ENCODE measurements at regions of chr19 and their contacts with region 1.

Region 1: DNA sequence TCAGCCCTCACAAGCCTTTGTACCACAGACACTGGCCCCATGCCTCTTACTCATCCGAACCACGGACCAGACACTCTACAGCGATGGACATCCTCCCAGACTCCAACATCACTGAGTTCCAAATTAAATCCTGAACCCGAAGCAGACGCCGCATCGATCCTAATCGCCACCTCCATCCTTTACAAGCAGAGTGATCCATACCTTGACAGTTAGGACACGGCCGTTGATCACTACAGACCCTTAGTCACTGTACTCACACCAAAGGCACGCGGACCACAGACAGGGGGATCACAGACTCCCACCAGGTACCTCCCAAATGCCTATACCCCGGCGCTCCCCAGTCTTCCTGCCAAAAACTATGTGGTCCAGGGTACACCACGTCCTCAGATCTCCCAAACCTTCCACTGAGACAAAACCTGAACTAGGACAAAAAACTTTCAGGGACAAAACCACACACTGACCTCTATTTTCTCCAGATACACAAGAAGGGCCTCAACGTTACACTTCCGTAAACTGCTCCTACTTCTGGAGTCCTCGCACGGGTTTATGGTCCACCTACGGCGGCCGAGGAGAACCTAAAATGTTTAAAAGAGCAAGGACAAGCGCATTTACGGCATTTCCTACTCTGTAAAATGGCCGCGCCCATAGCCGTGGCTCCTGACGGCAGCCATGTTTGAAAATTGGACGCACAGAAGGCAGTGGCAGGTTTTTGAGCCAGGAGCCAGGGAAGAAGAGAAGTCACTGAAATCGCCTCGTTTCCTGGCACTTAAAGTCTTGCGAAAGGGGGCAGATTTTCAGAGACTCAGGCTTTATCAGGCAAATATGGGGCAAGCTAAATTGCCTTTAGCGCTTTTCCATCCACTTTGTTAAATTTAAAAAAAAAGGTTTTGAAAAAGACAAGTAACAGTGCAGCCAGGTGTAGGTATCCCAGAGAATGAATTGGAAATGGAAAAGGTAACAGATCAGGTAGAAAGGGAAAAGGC is at the start of gene ZNF350:
- DNase-seq: peak; percentile 93 to 96 (median 94)
- ATAC-seq: peak; percentile 98 to 99
- H3K4me3 ChIP-seq: peak within 1 kb of the TSS; percentile 99
- H3K27ac ChIP-seq: peak within 1 kb of the TSS; percentile 82
- H3K4me1 ChIP-seq: peaks cover 4% of the 10 kb centered on the region
- H3K27me3 ChIP-seq: no peaks in the 10 kb centered on the region
- total RNA-seq, gene ZNF350: 9.2 to 11.3 (median 9.8) TPM

Region 2: DNA sequence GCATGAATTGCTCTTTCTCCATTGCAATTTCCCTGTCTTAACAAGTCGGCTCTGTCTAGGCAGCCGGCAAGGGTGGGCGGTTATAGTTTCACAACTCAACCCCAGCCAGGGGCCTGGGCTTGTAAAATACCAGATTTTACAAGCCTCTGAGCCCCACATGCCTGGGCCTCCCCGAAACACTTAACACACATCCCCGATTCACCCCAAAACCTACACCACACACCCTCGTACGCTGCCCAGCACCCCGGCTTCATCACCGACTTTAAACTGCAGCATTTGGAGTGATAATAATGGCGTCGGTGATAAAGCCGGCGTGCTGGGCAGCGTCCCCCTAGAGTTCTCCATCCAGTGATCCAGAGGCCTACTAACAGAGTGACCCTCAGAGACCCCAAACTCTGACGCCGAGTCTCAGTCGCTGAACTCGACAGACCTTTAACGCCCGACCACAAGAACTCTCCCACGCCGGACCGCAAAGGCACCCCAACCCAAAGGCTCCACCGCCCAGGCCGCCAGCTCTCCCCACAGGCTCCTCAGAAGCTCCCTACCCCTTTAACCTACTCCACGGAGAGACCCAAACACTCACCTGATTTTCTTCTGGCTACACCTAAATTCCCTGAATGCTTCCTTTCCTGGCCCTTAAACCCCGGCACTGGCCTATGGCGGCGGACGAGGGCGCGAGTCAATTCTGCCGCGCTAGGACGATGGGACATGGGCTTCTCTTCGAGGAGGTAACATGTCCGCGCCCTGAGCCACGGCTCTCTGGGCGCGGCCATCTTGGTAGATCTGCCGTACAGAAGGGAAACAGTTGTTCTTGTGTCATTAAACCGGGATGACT is 82.1 kb before region 1 on chr19 and contains the start of gene ZNF649:
- intact Hi-C with region 1: loop called in 1 of 4 experiments (anchors 10 kb)
- DNase-seq: peak; percentile 84 to 94 (median 93)
- ATAC-seq: peak; percentile 100
- H3K4me3 ChIP-seq: peak within 1 kb of the TSS; percentile 93
- H3K27ac ChIP-seq: peak within 1 kb of the TSS; percentile 84
- H3K4me1 ChIP-seq: no peaks in the 10 kb centered on the region
- H3K27me3 ChIP-seq: no peaks in the 10 kb centered on the region
- total RNA-seq, gene ZNF649: 11.2 to 14.1 (median 11.7) TPM

Region 3: DNA sequence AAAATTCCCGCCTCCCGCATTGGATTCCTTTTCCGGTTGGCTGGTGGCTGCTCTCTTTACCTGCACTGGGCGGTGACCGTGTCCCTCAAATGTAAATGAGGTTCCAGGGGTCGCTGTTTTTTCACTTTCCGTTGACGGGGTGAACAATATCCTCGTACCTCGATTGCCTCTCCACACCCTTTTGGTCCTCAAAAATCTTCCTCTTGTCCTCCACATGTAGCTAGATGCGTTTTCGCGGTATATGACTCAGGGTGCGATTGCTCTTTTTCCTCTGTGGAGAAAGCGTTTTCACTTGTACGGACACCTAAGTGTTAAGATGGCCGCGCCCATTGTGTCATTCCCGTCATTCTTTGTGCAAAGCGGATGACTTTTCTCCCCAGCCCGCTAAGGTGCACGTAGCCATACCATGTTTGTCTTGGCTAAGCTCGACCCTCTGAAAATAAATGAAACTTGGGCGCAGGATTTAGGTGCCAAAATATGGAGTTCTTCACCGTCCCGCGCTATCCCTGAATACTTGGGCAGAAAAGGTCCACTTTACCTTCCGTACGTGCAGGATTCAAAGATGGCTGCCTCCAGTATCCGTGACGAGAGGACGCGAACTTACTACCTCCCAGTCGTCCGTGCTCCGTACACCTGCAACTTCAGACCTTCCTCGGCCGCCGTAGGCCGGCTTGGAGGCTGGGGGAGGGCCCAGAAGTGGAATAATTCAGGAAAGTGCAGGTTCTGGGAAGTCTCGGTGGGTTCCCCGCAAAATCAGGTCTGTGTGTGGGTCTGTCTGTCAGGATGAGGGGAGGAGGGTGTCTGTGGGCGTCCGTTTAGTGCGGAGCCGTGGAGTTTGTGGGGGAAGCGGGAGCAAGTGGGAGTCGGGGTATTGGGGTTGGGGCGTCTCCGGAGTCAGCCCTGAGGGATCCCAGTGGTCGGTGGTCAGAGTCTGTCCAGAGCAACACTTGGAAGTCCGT is 59.5 kb before region 1 on chr19 and contains the start of gene ZNF613:
- intact Hi-C with region 1: loop called in 1 of 4 experiments (anchors 10 kb)
- DNase-seq: peak; percentile 91 to 94 (median 94)
- ATAC-seq: peak; percentile 98 to 99
- H3K4me3 ChIP-seq: peak within 1 kb of the TSS; percentile 99
- H3K27ac ChIP-seq: peak within 1 kb of the TSS; percentile 95
- H3K4me1 ChIP-seq: peaks cover 3% of the 10 kb centered on the region
- H3K27me3 ChIP-seq: no peaks in the 10 kb centered on the region
- total RNA-seq, gene ZNF613: 3.4 to 6.2 (median 5.3) TPM

Measured in right cardiac atrium (tissue), 5 donors.